CD4-positive, alpha-beta T cell (primary cell): ENCODE measurements at regions of chr12 and their contacts with region 1.

Region 1: DNA sequence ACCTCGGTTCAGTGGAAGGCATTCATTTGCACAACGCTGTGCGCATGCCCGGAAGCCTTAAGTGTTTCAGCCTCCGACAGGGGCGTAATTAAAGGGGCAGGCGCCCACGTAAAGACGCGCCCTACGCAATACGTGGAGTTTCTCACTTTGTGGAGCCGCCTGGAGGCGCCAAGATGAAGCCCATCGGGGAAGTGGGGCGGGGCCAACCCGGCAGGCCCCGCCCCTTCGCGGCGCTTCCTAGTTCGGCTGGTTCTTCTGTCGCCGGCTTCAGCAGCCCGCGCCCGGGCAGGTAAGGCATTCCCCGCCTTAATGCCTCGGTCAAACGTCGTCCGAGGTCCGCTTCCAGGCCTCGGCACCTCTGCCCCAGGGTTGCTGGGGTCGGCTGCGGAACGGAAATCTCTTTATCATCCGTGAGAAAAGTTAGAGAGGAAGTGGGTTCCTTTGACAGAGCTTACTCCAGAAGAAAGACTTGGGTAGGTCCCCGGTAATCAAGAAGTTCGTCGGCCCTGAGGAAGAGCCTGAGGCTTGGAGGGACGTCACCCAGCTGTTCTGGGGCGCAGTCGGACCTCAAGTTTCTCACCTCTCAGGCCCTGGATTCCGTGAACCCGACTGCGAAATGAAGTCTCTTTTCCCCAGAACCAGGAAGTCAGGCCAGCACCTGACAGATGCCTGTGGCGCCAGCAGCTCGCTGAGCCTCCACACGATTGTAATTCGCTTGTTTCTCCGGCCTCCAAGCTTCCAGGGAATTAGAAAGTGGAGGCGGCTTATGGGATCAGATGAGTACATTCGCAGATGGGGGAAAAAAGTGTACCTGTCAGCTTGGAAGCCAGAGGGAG is at the starts of genes IRAK4 and PUS7L:
- DNase-seq: peak; percentile 90 to 99 (median 94)
- ATAC-seq: peak; percentile 95
- H3K4me3 ChIP-seq: peak within 1 kb of the TSS; percentile 83
- H3K4me3 Mint-ChIP-seq: peak within 1 kb of the TSS; percentile 98
- H3K27ac ChIP-seq: peak within 1 kb of the TSS; percentile 87 to 94
- H3K27ac Mint-ChIP-seq: peak within 1 kb of the TSS; percentile 100
- H3K4me1 ChIP-seq: peaks cover 33% of the 10 kb centered on the region
- H3K4me1 Mint-ChIP-seq: peaks cover 87% of the 10 kb centered on the region
- H3K27me3 ChIP-seq: no peaks in the 10 kb centered on the region
- H3K27me3 Mint-ChIP-seq: no peaks in the 10 kb centered on the region
- CTCF ChIP-seq: peak; percentile 52
- total RNA-seq, gene IRAK4: 27.3 to 29.0 TPM
- total RNA-seq, gene PUS7L: 10.9 to 15.3 TPM

Region 2: DNA sequence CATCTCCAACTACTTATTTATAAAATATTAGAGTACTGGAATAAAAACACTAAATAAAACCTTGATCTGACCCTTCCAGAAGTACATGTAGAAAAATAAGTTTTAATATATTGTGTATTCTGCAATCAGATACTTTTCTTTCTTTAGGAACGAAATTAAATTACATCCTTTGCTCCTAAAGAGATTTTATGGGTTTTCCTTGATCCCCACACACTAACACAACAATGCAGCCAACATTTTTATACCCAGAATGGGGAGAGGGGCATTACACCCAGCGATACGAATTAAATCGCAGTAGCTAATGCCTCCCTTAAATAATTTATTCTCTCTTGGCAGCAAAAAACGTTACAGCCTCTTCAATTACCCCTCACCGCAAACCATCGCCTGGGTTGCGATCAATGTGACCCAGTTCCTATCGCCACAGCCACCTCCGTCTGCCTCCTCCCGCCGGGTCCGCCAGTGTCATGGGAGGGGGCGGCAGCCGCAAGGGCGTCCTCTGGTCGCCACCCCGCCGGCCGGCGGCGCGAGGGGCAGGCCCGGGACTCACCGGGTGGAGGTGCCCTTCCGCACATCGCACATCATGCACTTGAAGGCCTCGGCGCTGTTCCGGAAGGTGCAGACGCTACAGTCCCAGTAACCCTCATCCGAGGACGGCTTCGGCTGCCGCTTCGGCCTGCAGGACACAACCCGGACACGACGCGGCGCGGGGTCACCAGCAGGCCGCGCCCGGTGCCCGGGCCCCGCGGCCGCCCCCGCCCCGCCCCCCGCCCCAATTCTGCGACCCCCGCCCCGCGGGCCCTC is 1521.7 kb before region 1 on chr12:
- CTCF ChIA-PET with region 1: no interaction called
- POLR2A ChIA-PET with region 1: no interaction called
- intact Hi-C with region 1: loop called in 1 of 2 experiments (anchors 5 kb)
- DNase-seq: peak; percentile 42 to 90 (median 62)
- ATAC-seq: peak; percentile 72
- H3K4me3 ChIP-seq: peak overlapping the region; percentile 64
- H3K4me3 Mint-ChIP-seq: peak overlapping the region; percentile 91
- H3K27ac ChIP-seq: peak overlapping the region; percentile 35 to 56
- H3K27ac Mint-ChIP-seq: peak overlapping the region; percentile 93
- H3K4me1 ChIP-seq: peaks cover 17% of the 10 kb centered on the region
- H3K4me1 Mint-ChIP-seq: peaks cover 55% of the 10 kb centered on the region
- H3K27me3 ChIP-seq: no peaks in the 10 kb centered on the region
- H3K27me3 Mint-ChIP-seq: no peaks in the 10 kb centered on the region
- CTCF ChIP-seq: peak; percentile 56

Region 3: GRCh38 chr12:43740511-43741100 is 18.3 kb before region 1 on chr12:
- CTCF ChIA-PET with region 1: no interaction called
- POLR2A ChIA-PET with region 1: no interaction called
- intact Hi-C with region 1: no loop called
- DNase-seq: no peak
- ATAC-seq: no peak
- H3K4me3 ChIP-seq: no peak overlapping the region
- H3K4me3 Mint-ChIP-seq: no peak overlapping the region
- H3K27ac ChIP-seq: no peak overlapping the region
- H3K27ac Mint-ChIP-seq: no peak overlapping the region
- H3K4me1 ChIP-seq: no peaks in the 10 kb centered on the region
- H3K4me1 Mint-ChIP-seq: no peaks in the 10 kb centered on the region
- H3K27me3 ChIP-seq: no peaks in the 10 kb centered on the region
- H3K27me3 Mint-ChIP-seq: no peaks in the 10 kb centered on the region
- CTCF ChIP-seq: no peak

Region 4: DNA sequence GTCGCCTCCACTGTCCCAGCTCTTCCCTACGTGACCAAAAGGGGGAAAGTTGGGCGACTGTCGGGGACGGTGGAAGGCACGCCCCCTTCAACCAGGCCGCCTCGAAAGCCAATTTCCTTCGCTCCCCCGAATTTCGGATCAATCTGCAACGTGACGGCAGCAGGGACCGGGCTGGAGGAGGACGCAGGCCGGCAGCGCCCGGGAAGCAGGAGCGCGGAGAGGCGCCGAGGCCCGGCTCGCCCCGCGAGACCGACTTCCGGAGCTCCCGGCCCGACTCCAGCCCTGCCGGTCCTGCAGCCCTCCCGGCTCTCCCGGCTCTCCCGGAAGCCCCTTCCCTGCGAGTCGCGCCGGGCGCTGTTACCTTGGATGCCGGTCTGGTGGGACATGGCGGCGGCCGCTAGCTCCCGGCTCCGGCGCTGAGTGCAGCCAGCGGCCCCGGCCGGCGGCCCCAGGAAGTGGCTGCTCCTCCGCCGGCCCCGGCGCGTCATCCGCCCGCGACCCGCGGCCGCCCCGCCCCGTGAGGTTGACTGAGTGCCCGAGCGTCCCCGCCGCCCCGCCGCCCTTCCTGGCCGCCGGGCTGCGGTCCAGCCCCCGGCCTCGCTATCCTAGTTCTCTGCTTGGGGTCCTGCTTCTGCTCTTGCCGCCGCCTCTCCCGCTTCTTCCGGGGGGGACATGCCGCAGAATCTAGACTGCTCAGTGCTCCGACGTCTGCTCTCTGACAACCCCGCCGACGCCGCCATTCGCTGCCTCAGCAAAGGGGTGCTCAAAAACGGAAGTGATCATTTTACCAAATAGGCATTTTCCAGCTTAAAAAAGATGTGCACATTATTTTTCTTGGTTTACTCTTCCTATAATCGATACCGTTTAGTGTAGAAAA is 47.2 kb after region 1 on chr12 and contains the start of gene TWF1:
- CTCF ChIA-PET with region 1: interaction called, 10 read pairs
- POLR2A ChIA-PET with region 1: interaction called, 90 read pairs
- intact Hi-C with region 1: loop called (anchors 1 to 2 kb)
- DNase-seq: peak; percentile 66 to 92 (median 80)
- ATAC-seq: peak; percentile 78
- H3K4me3 ChIP-seq: peak within 1 kb of the TSS; percentile 89
- H3K4me3 Mint-ChIP-seq: peak within 1 kb of the TSS; percentile 100
- H3K27ac ChIP-seq: peak within 1 kb of the TSS; percentile 87 to 94
- H3K27ac Mint-ChIP-seq: peak within 1 kb of the TSS; percentile 97
- H3K4me1 ChIP-seq: no peaks in the 10 kb centered on the region
- H3K4me1 Mint-ChIP-seq: peaks cover 48% of the 10 kb centered on the region
- H3K27me3 ChIP-seq: no peaks in the 10 kb centered on the region
- H3K27me3 Mint-ChIP-seq: no peaks in the 10 kb centered on the region
- CTCF ChIP-seq: no peak
- total RNA-seq, gene TWF1: 72.3 to 77.5 TPM

Region 5: GRCh38 chr12:43835656-43836474 is 76.9 kb after region 1 on chr12 and contains the start of gene TMEM117:
- CTCF ChIA-PET with region 1: no interaction called
- POLR2A ChIA-PET with region 1: interaction called, 31 read pairs
- intact Hi-C with region 1: no loop called
- DNase-seq: peak; percentile 40 to 78 (median 55)
- ATAC-seq: peak; percentile 69
- H3K4me3 ChIP-seq: peak within 1 kb of the TSS; percentile 64
- H3K4me3 Mint-ChIP-seq: peak within 1 kb of the TSS; percentile 89
- H3K27ac ChIP-seq: peak within 1 kb of the TSS; percentile 73 to 79
- H3K27ac Mint-ChIP-seq: peak within 1 kb of the TSS; percentile 84
- H3K4me1 ChIP-seq: peaks cover 38% of the 10 kb centered on the region
- H3K4me1 Mint-ChIP-seq: peaks cover 62% of the 10 kb centered on the region
- H3K27me3 ChIP-seq: no peaks in the 10 kb centered on the region
- H3K27me3 Mint-ChIP-seq: no peaks in the 10 kb centered on the region
- CTCF ChIP-seq: no peak
- total RNA-seq, gene TMEM117: 3.4 to 4.4 TPM